Left lung (tissue), 14 donors: ENCODE measurements at regions of chr2 and their contacts with region 1.

Region 1: DNA sequence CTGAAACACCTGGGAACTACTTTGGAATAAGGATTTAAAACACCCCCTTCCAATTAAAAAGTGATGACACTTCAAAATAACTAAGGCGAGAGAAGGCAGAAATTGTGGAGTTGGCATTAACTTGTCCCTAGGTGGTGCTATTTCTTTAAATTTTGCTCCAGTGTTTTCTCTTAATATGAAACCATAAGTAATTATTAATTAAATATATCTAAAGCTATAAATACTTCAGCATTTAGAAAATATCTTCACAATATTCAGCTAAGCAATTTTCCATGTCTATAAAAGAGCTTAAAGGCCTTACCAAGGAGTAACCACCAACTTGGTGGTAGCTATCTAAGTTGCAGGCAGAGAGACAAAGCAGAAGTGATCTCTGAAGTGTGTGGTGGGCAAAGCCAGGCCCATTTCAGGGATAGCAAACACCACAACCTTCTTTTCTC is 186.8 kb upstream of the PGAP1 start:
- DNase-seq: peak in 1 of 4 donors; percentile 36
- ATAC-seq: peak; percentile 52
- H3K4me3 ChIP-seq: no peak overlapping the region
- H3K27ac ChIP-seq: no peak overlapping the region
- H3K4me1 ChIP-seq: peaks cover 0 to 6% of the 10 kb centered on the region in 2 donors
- H3K27me3 ChIP-seq: no peaks in the 10 kb centered on the region
- CTCF ChIP-seq: peak; percentile 57

Region 2: DNA sequence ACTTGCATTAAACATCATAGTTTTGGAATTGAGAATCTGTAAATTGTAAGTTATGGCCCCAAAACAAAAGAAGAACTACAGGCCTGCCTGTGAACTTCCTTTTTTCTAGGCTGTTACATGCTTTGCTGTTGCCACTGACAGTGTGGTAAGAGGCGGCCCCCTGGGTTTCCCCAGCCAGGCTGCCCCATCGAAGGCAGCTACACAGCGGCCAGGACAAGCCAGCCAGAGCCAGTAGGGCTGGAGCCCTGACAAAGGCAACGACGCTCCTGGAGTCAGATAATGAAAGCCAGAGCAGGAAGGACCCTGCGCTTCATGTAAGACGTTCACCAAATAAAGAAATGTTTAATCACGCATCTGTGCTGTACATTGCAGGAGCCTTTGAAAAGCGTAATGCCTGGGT is 142.2 kb after region 1 on chr2:
- intact Hi-C with region 1: no loop called
- DNase-seq: peak in 3 of 4 donors; percentile 72 to 95 (median 87)
- ATAC-seq: peak; percentile 94
- H3K4me3 ChIP-seq: peak overlapping the region in 1 of 2 donors; percentile 11
- H3K27ac ChIP-seq: peak overlapping the region; percentile 65 to 87
- H3K4me1 ChIP-seq: peaks cover 15 to 76% of the 10 kb centered on the region in 2 donors
- H3K27me3 ChIP-seq: no peaks in the 10 kb centered on the region
- CTCF ChIP-seq: no peak

Region 3: DNA sequence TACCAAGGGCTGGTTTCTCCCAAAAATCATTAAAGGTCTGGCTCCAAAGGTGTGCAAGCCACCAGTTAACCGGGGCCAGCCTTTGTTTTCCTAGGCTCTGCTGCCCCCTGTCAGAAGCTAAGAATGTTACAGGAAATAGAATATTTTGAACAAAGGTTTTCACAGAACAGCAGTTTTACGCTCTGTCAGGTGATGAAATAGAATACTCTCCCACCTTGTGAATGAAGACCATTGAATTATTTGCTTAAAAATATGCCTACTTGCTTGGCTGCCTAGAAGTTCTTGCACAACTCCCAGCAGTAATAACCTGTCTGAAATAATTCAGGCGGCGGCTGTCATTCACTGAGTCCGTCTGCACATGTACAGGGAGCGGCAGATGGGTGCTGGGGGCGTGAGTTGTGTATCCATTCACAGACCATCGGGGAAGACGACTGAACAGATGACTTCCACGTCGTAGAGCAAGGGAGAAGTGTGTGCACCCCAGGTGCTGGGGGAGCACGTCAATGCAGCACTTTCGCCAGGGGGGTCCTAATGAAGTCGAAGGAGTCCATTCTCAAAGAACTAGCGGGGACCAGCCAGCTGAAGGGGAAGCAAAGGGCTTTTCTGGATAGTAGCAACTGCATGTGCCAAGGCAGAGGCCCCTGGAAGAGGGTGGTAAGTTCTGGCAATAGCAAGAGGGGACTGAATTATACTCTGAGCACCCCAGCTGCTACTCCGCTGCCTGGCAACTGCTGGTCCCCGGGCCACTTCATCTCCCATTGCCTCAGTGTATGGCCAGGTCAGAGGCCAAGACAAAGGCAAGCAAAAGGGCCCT is 265.4 kb after region 1 on chr2:
- intact Hi-C with region 1: loop called in 1 of 2 experiments (anchors 5 kb)
- DNase-seq: peak in 2 of 4 donors; percentile 20 to 63
- ATAC-seq: peak; percentile 96
- H3K4me3 ChIP-seq: no peak overlapping the region
- H3K27ac ChIP-seq: no peak overlapping the region
- H3K4me1 ChIP-seq: no peaks in the 10 kb centered on the region
- H3K27me3 ChIP-seq: no peaks in the 10 kb centered on the region
- CTCF ChIP-seq: peak; percentile 59 to 66